Ovary (tissue), 10 donors: ENCODE measurements at regions of chr6 and their contacts with region 1.

Region 1: GRCh38 chr6:104566411-104566810 is 293.3 kb downstream of the HACE1 start:
- DNase-seq: no peak
- H3K4me3 ChIP-seq: no peak overlapping the region
- H3K27ac ChIP-seq: no peak overlapping the region
- H3K4me1 ChIP-seq: no peaks in the 10 kb centered on the region
- H3K27me3 ChIP-seq: no peaks in the 10 kb centered on the region
- CTCF ChIP-seq: no peak
- EP300 ChIP-seq: no peak
- POLR2A ChIP-seq: no peak

Region 2: DNA sequence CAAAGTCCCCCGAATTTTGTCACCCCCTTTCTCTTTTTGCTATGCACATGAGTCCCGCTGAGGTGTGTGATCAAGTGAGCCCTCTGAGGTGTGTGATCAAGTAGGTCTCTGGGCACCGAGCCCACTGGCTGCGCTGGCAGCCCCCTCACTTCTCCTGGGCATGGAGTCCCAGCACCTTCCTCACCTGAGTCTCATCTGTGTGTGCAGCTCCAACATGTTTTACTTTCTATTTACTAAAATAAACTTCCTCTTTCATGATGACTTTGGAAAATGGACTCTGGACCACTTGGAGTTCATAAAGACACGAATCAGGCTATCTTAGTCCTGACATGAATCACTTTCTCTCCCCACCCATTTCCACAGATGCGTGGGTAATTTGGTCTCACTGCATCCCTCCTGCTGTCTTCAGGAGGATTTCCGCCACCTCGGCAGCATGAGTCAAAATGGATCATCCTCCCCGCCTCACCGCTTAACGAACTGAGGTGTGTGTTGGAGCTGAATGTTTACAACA is 1559.6 kb after region 1 on chr6:
- intact Hi-C with region 1: loop called in 1 of 4 experiments (anchors 10 kb)
- DNase-seq: no peak
- H3K4me3 ChIP-seq: no peak overlapping the region
- H3K27ac ChIP-seq: no peak overlapping the region
- H3K4me1 ChIP-seq: no peaks in the 10 kb centered on the region
- H3K27me3 ChIP-seq: no peaks in the 10 kb centered on the region
- CTCF ChIP-seq: no peak
- EP300 ChIP-seq: no peak
- POLR2A ChIP-seq: no peak